ENCODE measurements at regions of chr10 and their contacts with region 1.

Region 1: DNA sequence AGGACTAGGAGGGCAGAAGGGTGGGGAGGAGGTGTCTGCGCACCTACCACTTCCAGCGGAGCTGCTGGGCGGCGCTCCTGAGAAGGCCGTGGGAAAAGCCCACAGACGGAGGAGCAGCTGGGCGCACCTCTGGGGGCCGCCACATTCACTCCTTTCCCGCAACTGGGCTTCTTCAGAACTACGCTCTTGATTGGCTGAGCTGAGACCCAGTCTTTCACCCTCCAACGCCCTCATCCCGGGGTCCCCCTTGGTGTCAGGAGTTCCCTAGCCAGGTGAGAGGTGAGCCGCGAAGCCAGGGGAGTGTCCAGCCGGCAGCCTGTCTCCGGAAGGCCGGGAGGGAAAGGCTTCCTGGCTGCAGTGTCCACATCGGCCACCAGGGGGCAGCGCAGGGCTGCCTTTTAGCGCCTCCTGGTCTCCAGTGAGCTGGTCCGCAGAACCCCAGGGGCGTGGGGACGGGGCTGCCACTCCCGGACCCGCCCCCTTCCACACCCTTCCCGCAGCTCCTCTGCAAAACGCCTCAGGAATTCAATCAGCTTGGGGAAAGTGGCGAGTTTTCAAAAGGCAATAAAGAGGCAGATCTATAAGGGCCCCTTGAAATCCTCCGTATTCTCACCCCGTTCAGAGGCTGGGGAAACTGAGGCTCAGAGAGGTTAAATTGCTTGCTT is 98.8 kb downstream of the CHST15 start:
- DNase-seq: peak; percentile 89 to 95
- H3K4me3 ChIP-seq: peak overlapping the region; percentile 21 to 25 (median 24)
- H3K27ac ChIP-seq: peak overlapping the region in 4 of 5 donors; percentile 52 to 65 (median 59)
- H3K4me1 ChIP-seq: peaks cover 19 to 45% (median 32%) of the 10 kb centered on the region in 4 donors
- H3K27me3 ChIP-seq: peaks cover 0 to 58% (median 44%) of the 10 kb centered on the region in 3 donors
- CTCF ChIP-seq: peak in 6 of 7 experiments; percentile 97 to 100 (median 98)
- EP300 ChIP-seq: no peak
- POLR2A ChIP-seq: no peak

Region 2: GRCh38 chr10:123229927-123230632 is 764.5 kb before region 1 on chr10:
- intact Hi-C with region 1: no loop called
- DNase-seq: no peak
- H3K4me3 ChIP-seq: no peak overlapping the region
- H3K27ac ChIP-seq: no peak overlapping the region
- H3K4me1 ChIP-seq: no peaks in the 10 kb centered on the region
- H3K27me3 ChIP-seq: no peaks in the 10 kb centered on the region
- CTCF ChIP-seq: no peak
- EP300 ChIP-seq: no peak
- POLR2A ChIP-seq: no peak

Region 3: GRCh38 chr10:124388823-124389612 is 394.5 kb after region 1 on chr10:
- intact Hi-C with region 1: loop called (anchors 2 kb)
- DNase-seq: peak; percentile 95 to 97
- H3K4me3 ChIP-seq: peak overlapping the region; percentile 46 to 58 (median 50)
- H3K27ac ChIP-seq: peak overlapping the region in 3 of 5 donors; percentile 12 to 68 (median 19)
- H3K4me1 ChIP-seq: peaks cover 6 to 15% (median 12%) of the 10 kb centered on the region in 4 donors
- H3K27me3 ChIP-seq: peaks cover 0 to 12% (median 0%) of the 10 kb centered on the region in 3 donors
- CTCF ChIP-seq: peak in 5 of 7 experiments; percentile 79 to 98 (median 88)
- EP300 ChIP-seq: no peak
- POLR2A ChIP-seq: no peak